Caco-2 (cell line): ENCODE measurements at regions of chr6 and their contacts with region 1.

Region 1: DNA sequence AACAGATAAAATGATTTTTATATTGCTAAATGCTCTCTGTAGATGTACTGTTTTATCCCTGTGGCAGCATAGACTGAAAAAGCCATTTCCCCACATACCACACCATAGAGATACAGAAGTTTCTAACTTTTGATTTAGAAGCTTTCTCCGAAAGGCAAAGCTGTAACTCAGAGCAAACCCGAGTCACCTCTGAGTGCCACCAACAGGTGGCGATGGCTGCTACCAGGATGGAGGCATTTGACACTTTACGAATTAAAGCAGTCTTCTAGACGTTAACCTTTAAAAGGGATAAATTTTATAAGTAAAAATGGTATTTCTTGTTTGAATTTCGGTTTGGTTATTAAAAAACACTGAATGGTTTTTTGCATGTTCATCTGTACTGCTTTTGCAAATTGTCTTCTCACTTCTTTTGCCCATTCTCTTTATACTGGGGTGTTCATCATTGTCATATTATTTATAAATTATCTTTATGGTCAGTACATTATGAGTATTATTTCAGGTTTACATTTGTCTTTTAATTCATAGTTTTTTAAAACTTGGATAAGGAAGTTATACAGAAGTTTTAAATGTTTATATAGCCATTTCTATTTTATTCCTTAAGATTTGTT is 201.0 kb upstream of the CEP162 start:
- DNase-seq: peak; percentile 46 to 53
- H3K4me3 ChIP-seq: no peak overlapping the region
- H3K4me3 Mint-ChIP-seq: no peak overlapping the region
- H3K27ac Mint-ChIP-seq: no peak overlapping the region
- H3K4me1 ChIP-seq: no peaks in the 10 kb centered on the region
- H3K4me1 Mint-ChIP-seq: no peaks in the 10 kb centered on the region
- H3K27me3 ChIP-seq: no peaks in the 10 kb centered on the region
- H3K27me3 Mint-ChIP-seq: no peaks in the 10 kb centered on the region
- CTCF ChIP-seq: peak; percentile 71 to 85

Region 2: DNA sequence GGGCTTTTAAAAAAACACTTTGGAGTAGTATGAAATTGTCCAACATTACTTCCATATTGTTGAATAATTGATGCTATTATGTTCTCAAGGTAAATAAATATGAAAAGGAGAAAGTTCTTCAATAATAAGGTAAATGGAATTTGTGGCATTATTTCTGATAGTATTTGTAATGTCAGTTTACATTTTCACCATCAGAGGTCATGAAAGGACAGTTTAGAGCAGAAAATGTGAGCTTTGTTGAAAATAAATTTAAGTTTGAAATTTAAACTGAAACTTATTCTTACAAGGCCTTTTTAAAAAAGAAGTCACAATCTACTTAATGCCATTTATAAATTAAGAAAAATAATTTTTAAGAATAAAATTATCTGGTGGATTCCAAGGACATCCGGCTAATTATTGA is 185.2 kb before region 1 on chr6:
- CTCF ChIA-PET with region 1: no interaction called
- POLR2A ChIA-PET with region 1: no interaction called
- intact Hi-C with region 1: loop called (anchors 2 kb)
- DNase-seq: no peak
- H3K4me3 ChIP-seq: no peak overlapping the region
- H3K4me3 Mint-ChIP-seq: no peak overlapping the region
- H3K27ac Mint-ChIP-seq: no peak overlapping the region
- H3K4me1 ChIP-seq: no peaks in the 10 kb centered on the region
- H3K4me1 Mint-ChIP-seq: no peaks in the 10 kb centered on the region
- H3K27me3 ChIP-seq: no peaks in the 10 kb centered on the region
- H3K27me3 Mint-ChIP-seq: no peaks in the 10 kb centered on the region
- CTCF ChIP-seq: peak in 1 of 2 experiments; percentile 29

Region 3: DNA sequence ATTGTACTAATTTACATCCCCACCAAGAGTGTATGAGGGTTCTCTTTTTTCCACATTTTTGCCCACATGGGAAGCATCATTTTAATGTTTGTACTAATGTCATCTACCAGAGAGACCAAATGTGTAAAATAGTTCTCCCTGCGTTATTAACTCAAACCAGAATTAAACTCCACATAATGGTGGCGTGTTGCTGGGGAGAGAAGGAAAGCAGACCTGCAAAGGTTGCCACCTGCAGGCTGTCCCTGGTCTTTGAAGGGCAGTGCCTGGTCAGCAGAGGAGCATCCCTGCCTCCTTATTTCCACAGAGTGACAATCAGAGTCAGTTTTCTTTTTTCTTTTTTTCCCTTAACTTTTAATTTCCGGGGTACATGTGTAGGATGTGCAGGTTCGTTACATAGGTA is 121.5 kb after region 1 on chr6:
- CTCF ChIA-PET with region 1: no interaction called
- POLR2A ChIA-PET with region 1: no interaction called
- intact Hi-C with region 1: loop called (anchors 5 kb)
- DNase-seq: peak in 1 of 2 experiments; percentile 12
- H3K4me3 ChIP-seq: no peak overlapping the region
- H3K4me3 Mint-ChIP-seq: no peak overlapping the region
- H3K27ac Mint-ChIP-seq: no peak overlapping the region
- H3K4me1 ChIP-seq: peaks cover 9% of the 10 kb centered on the region
- H3K4me1 Mint-ChIP-seq: peaks cover 15% of the 10 kb centered on the region
- H3K27me3 ChIP-seq: no peaks in the 10 kb centered on the region
- H3K27me3 Mint-ChIP-seq: no peaks in the 10 kb centered on the region
- CTCF ChIP-seq: no peak

Region 4: GRCh38 chr6:85015396-85015990 is 587.1 kb after region 1 on chr6:
- CTCF ChIA-PET with region 1: no interaction called
- POLR2A ChIA-PET with region 1: no interaction called
- intact Hi-C with region 1: loop called (anchors 1 kb)
- DNase-seq: peak; percentile 57 to 61
- H3K4me3 ChIP-seq: no peak overlapping the region
- H3K4me3 Mint-ChIP-seq: no peak overlapping the region
- H3K27ac Mint-ChIP-seq: no peak overlapping the region
- H3K4me1 ChIP-seq: no peaks in the 10 kb centered on the region
- H3K4me1 Mint-ChIP-seq: no peaks in the 10 kb centered on the region
- H3K27me3 ChIP-seq: no peaks in the 10 kb centered on the region; the same call in 1 of the 2 replicates
- H3K27me3 Mint-ChIP-seq: peaks cover 18% of the 10 kb centered on the region
- CTCF ChIP-seq: peak; percentile 65 to 82

Region 5: DNA sequence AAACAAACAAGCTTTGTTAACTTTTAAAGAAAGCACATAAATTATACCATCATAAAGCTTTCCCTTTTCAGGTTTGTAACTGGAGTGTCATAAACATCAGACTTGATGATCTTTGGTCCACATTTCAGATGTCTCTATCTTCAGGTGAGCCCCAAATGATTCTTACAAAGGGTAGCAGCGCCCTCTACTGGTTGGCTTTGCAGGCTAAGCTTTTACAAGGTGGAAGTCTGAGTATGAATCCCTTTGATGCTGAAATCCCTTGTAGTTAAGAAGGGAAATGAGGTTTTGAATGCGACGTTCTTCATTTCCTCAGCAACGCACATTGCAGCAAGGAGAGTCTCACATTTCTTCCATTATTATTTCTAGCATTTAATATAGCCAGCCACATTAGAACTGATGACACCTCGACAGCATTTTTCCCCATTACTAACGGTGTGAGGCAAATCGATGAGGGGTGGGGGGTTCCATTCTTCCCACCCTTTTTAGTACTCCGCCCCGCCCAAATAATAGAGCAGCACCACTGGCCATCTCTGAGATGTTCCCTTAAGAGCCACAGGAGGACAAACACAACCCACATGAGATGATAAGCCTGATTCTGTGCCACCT is 895.1 kb after region 1 on chr6:
- CTCF ChIA-PET with region 1: no interaction called
- POLR2A ChIA-PET with region 1: no interaction called
- intact Hi-C with region 1: loop called (anchors 5 kb)
- DNase-seq: peak; percentile 79 to 82
- H3K4me3 ChIP-seq: no peak overlapping the region
- H3K4me3 Mint-ChIP-seq: no peak overlapping the region
- H3K27ac Mint-ChIP-seq: no peak overlapping the region
- H3K4me1 ChIP-seq: no peaks in the 10 kb centered on the region
- H3K4me1 Mint-ChIP-seq: no peaks in the 10 kb centered on the region
- H3K27me3 ChIP-seq: no peaks in the 10 kb centered on the region
- H3K27me3 Mint-ChIP-seq: peaks cover 6% of the 10 kb centered on the region
- CTCF ChIP-seq: peak; percentile 84 to 87